ENCODE measurements at regions of chr12 and their contacts with region 1.

Region 1: DNA sequence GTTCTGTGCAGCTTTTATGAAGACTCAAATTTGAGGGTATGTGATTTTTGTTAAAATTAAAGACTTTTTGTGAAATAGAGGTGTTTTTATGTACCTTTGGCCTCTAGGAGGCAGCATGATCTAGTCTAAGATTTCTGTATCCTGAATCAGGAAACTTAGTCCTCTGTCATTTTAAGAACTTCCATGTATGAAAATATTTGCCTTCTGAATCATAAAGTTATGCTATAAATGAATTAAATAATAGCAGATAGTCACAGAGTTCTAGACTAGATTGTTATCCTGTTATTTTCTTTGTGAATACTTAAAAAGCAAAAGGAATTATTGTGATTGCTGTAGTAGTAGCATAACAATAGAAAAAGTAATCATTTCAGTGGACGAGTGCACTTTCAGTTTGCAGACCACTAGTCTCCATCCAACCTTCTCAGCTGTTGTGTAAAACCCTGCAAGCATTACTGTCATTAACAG is 56.3 kb downstream of the FGD4 start:
- DNase-seq: no peak
- ATAC-seq: peak; percentile 86
- H3K4me3 ChIP-seq: peak overlapping the region in 1 of 2 donors; percentile 64
- H3K27ac ChIP-seq: no peak overlapping the region
- H3K4me1 ChIP-seq: peaks cover 1 to 2% of the 10 kb centered on the region in 2 donors
- H3K27me3 ChIP-seq: no peaks in the 10 kb centered on the region

Region 2: GRCh38 chr12:32198555-32198954 is 257.1 kb before region 1 on chr12:
- intact Hi-C with region 1: no loop called
- DNase-seq: no peak
- ATAC-seq: no peak
- H3K4me3 ChIP-seq: no peak overlapping the region
- H3K27ac ChIP-seq: no peak overlapping the region
- H3K4me1 ChIP-seq: peaks cover 0 to 2% of the 10 kb centered on the region in 2 donors
- H3K27me3 ChIP-seq: no peaks in the 10 kb centered on the region

Region 3: GRCh38 chr12:32522331-32523221 is 66.9 kb after region 1 on chr12:
- intact Hi-C with region 1: loop called in 1 of 2 experiments (anchors 2 kb)
- DNase-seq: no peak
- ATAC-seq: peak; percentile 76
- H3K4me3 ChIP-seq: no peak overlapping the region
- H3K27ac ChIP-seq: peak overlapping the region; percentile 79 to 93
- H3K4me1 ChIP-seq: peaks cover 0 to 3% of the 10 kb centered on the region in 2 donors
- H3K27me3 ChIP-seq: no peaks in the 10 kb centered on the region

Region 4: DNA sequence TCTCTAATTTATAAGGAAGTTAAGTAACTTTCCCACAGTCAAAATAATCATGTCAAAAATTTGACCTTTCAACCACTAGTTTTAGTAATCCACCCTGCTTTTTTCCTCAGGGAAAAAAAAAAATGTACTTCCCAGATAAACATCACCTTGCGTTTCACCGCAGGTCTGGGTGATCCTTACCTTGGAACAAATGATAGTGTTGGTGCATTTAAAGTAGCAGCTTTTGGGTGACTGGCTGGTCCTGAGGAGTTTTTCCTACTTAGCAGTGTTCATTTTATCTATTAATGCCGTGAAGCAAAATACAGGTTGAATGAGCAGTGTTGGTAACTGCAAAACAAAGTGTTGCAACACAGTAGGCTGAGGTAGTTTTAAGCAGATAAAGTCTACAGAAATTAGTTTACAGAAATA is 86.2 kb after region 1 on chr12:
- intact Hi-C with region 1: loop called (anchors 5 kb)
- DNase-seq: no peak
- ATAC-seq: no peak
- H3K4me3 ChIP-seq: no peak overlapping the region
- H3K27ac ChIP-seq: no peak overlapping the region
- H3K4me1 ChIP-seq: peaks cover 5 to 7% of the 10 kb centered on the region in 2 donors
- H3K27me3 ChIP-seq: no peaks in the 10 kb centered on the region

Region 5: GRCh38 chr12:32548691-32549281 is 93.1 kb after region 1 on chr12:
- intact Hi-C with region 1: loop called (anchors 5 kb)
- DNase-seq: peak in 1 of 2 donors; percentile 77
- ATAC-seq: peak; percentile 73
- H3K4me3 ChIP-seq: peak overlapping the region in 1 of 2 donors; percentile 0
- H3K27ac ChIP-seq: peak overlapping the region; percentile 53 to 91
- H3K4me1 ChIP-seq: peaks cover 0 to 12% of the 10 kb centered on the region in 2 donors
- H3K27me3 ChIP-seq: no peaks in the 10 kb centered on the region

Region 6: GRCh38 chr12:32659908-32660440 is 204.3 kb after region 1 on chr12:
- intact Hi-C with region 1: loop called (anchors 5 kb)
- DNase-seq: no peak
- ATAC-seq: no peak
- H3K4me3 ChIP-seq: no peak overlapping the region
- H3K27ac ChIP-seq: no peak overlapping the region
- H3K4me1 ChIP-seq: peaks cover 0 to 4% of the 10 kb centered on the region in 2 donors
- H3K27me3 ChIP-seq: no peaks in the 10 kb centered on the region

Region 7: GRCh38 chr12:32671930-32672780 is 216.5 kb after region 1 on chr12:
- intact Hi-C with region 1: loop called (anchors 5 kb)
- DNase-seq: no peak
- ATAC-seq: peak; percentile 75
- H3K4me3 ChIP-seq: no peak overlapping the region
- H3K27ac ChIP-seq: no peak overlapping the region
- H3K4me1 ChIP-seq: no peaks in the 10 kb centered on the region
- H3K27me3 ChIP-seq: no peaks in the 10 kb centered on the region

Measured in aorta (tissue), 5 donors.